Dendritic cell treated with granulocyte-macrophage colony-stimulating factor and Interleukin-4, amounts not matched to agents 40 ng/mL and 50 ng/mL, for 4 days (primary cell): ENCODE measurements at regions of chr12 and their contacts with region 1.

Region 1: GRCh38 chr12:39272871-39273770 is 169.8 kb downstream of the KIF21A start:
- H3K4me3 Mint-ChIP-seq: no peak overlapping the region
- H3K27ac Mint-ChIP-seq: no peak overlapping the region
- H3K4me1 Mint-ChIP-seq: no peaks in the 10 kb centered on the region
- H3K27me3 Mint-ChIP-seq: no peaks in the 10 kb centered on the region

Region 2: DNA sequence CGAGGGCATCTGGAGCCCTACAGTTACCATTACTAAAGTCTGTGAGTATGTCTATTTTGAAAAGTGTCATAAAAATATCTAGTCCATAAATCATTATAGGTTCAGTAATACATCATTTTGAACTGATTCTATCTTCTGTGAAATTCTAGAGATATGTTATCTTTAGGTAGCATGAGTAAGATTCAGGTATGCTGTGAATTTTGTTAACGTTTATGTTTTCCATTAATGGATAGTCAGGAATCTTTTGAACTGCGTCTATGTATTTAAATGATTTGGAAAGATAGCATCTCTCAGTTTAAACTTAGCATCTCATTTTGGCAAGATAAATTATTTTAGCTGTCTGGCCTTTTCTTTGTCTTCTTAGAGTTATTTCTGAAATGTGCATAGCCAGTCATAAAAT is 948.2 kb before region 1 on chr12:
- intact Hi-C with region 1: loop called (anchors 5 kb)
- H3K4me3 Mint-ChIP-seq: no peak overlapping the region
- H3K27ac Mint-ChIP-seq: no peak overlapping the region
- H3K4me1 Mint-ChIP-seq: no peaks in the 10 kb centered on the region
- H3K27me3 Mint-ChIP-seq: no peaks in the 10 kb centered on the region

Region 3: DNA sequence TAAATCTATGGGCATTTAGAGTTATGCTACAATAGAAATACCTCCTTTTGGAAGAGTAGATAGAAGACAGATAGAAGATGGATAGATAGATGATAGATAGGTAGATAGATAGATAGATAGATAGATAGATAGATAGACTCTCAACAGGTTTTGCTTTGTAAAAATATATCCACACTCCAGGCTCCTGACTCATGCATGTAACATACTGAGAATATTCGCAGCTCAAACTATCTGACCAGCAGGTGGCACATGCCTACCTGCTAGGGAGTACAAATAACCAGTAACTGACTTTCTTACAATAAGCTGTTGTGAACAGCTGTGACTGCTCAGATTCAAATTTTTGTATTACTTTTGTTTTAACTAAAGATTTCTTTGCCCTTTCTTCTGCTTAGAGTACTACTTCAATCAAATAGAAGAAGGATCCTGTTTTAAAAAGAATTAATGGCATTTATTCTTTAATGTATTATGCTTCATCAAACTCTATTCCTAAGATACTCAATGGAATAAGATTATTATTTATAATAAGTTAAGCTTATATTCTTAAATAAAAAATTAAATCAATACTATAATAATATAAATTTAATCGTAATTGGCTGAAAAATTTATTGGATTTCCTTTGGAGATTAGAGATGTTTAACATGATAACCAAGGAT is 352.0 kb before region 1 on chr12:
- intact Hi-C with region 1: loop called (anchors 10 kb)
- H3K4me3 Mint-ChIP-seq: no peak overlapping the region
- H3K27ac Mint-ChIP-seq: no peak overlapping the region
- H3K4me1 Mint-ChIP-seq: no peaks in the 10 kb centered on the region
- H3K27me3 Mint-ChIP-seq: no peaks in the 10 kb centered on the region

Region 4: DNA sequence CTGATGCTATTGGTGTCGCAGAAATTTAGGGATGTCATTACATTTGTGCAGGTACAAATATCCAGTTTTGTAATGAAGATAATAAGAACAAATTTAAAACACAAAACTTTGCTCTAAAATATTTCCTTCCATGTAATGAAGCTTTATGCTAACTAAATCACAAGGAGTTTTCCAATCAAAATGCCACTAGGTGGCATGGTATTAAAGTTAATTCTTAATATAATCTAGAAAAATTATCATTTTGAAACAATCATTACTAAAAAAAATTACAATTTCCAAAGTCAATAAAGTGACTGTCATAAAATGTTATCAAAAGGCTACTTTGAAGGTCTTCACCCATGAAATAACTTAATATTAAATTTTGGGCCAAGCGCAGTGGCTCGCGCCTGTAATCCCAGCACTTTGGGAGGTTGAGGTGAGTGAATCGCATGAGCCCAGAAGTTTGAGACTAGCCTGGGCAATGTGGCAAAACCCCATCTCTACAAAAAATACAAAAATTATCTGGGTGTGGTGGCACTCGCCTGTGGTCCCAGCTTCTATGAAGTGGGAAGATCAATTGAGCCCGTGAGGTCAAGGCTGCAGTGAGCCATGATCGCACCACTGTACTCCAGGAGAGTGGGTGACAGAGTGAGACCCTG is 92.4 kb after region 1 on chr12:
- intact Hi-C with region 1: no loop called
- H3K4me3 Mint-ChIP-seq: no peak overlapping the region
- H3K27ac Mint-ChIP-seq: no peak overlapping the region
- H3K4me1 Mint-ChIP-seq: no peaks in the 10 kb centered on the region
- H3K27me3 Mint-ChIP-seq: no peaks in the 10 kb centered on the region